Body of pancreas (tissue), 4 donors: ENCODE measurements at regions of chr2 and their contacts with region 1.

Region 1: GRCh38 chr2:11697103-11697871 is 27.3 kb upstream of the NTSR2 start:
- DNase-seq: peak in 1 of 4 donors; percentile 25
- ATAC-seq: no peak
- H3K4me3 ChIP-seq: no peak overlapping the region
- H3K27ac ChIP-seq: peak overlapping the region in 2 of 4 donors; percentile 27 to 49
- H3K4me1 ChIP-seq: peaks cover 10% of the 10 kb centered on the region
- H3K27me3 ChIP-seq: no peaks in the 10 kb centered on the region
- CTCF ChIP-seq: no peak
- POLR2A ChIP-seq: no peak

Region 2: GRCh38 chr2:11738589-11739436 is 41.5 kb after region 1 on chr2:
- intact Hi-C with region 1: loop called (anchors 5 kb)
- DNase-seq: peak; percentile 56 to 88 (median 76)
- ATAC-seq: peak; percentile 77
- H3K4me3 ChIP-seq: no peak overlapping the region
- H3K27ac ChIP-seq: peak overlapping the region in 1 of 4 donors; percentile 27
- H3K4me1 ChIP-seq: peaks cover 13% of the 10 kb centered on the region
- H3K27me3 ChIP-seq: no peaks in the 10 kb centered on the region
- CTCF ChIP-seq: peak in 6 of 7 experiments; percentile 13 to 62 (median 46)
- POLR2A ChIP-seq: no peak

Region 3: GRCh38 chr2:11796190-11797171 is 99.2 kb after region 1 on chr2:
- intact Hi-C with region 1: no loop called
- DNase-seq: no peak
- ATAC-seq: no peak
- H3K4me3 ChIP-seq: no peak overlapping the region
- H3K27ac ChIP-seq: no peak overlapping the region
- H3K4me1 ChIP-seq: no peaks in the 10 kb centered on the region
- H3K27me3 ChIP-seq: no peaks in the 10 kb centered on the region
- CTCF ChIP-seq: no peak
- POLR2A ChIP-seq: no peak